Heart left ventricle (tissue), 16 donors: ENCODE measurements at regions of chr12 and their contacts with region 1.

Region 1: GRCh38 chr12:27434673-27435565 is 11.6 kb upstream of the SMCO2 start:
- DNase-seq: no peak
- ATAC-seq: peak; percentile 53 to 63 (median 59)
- H3K4me3 ChIP-seq: no peak overlapping the region
- H3K27ac ChIP-seq: peak overlapping the region in 6 of 12 donors; percentile 3 to 45 (median 27)
- H3K4me1 ChIP-seq: peaks cover 0 to 19% (median 3%) of the 10 kb centered on the region in 12 donors
- H3K27me3 ChIP-seq: no peaks in the 10 kb centered on the region
- CTCF ChIP-seq: peak; percentile 30 to 77 (median 57)
- POLR2A ChIP-seq: no peak

Region 2: GRCh38 chr12:27480016-27480415 is 45.1 kb after region 1 on chr12:
- intact Hi-C with region 1: loop called in 1 of 10 experiments (anchors 5 kb)
- DNase-seq: no peak
- ATAC-seq: no peak
- H3K4me3 ChIP-seq: no peak overlapping the region
- H3K27ac ChIP-seq: no peak overlapping the region
- H3K4me1 ChIP-seq: peaks cover 0 to under 1% (median 0%) of the 10 kb centered on the region in 12 donors
- H3K27me3 ChIP-seq: no peaks in the 10 kb centered on the region
- CTCF ChIP-seq: no peak
- POLR2A ChIP-seq: no peak

Region 3: GRCh38 chr12:27505109-27505508 is 70.2 kb after region 1 on chr12:
- intact Hi-C with region 1: loop called in 1 of 10 experiments (anchors 5 kb)
- DNase-seq: no peak
- ATAC-seq: no peak
- H3K4me3 ChIP-seq: no peak overlapping the region
- H3K27ac ChIP-seq: peak overlapping the region; percentile 31 to 83 (median 59)
- H3K4me1 ChIP-seq: peaks cover 0 to 34% (median 14%) of the 10 kb centered on the region in 12 donors
- H3K27me3 ChIP-seq: no peaks in the 10 kb centered on the region
- CTCF ChIP-seq: no peak
- POLR2A ChIP-seq: no peak

Region 4: DNA sequence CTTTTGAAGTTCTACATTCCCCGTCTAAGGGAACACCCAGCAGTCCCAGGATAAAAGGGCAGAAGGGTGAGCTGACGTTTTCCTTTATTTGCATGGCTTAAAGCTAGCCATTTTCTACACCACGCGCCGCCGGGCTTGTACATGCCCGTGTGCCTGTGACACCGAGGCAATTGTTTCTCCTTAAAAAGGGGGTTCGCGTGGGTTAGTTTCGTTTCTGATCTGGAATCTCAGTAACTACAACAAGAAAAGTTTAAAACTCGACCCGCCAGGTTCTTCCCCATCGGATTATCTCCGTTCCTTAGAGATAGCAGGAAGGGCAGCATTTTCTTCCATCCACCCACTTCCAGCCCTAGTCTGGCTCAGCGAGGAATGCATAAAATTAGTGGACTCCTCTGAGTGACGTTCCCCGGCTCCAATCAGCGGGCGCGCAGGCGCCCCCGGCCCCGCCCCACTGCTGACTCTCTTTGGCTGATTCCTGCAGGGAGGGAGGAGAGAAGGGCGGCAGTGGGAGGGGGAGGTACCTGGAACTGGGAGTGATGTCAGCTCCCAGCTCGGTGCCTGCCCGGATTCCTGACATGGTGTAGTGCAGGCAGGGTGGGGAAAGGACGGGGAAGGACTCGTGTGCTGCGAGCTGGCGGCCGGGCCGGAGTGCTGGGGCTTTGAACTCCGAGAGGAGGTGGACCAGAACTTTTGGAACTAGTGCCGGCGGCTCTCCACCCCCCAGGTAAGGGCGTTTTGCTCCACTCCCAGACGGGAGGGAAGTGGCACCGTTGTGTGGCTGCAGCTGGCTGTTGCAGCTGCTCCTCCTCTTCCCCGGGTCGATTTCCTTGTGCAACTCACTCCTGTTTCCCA is 88.9 kb after region 1 on chr12 and contains the start of gene PPFIBP1:
- intact Hi-C with region 1: loop called in 7 of 10 experiments (anchors 5 to 10 kb)
- DNase-seq: peak; percentile 98 to 99 (median 99)
- ATAC-seq: peak; percentile 97 to 98 (median 98)
- H3K4me3 ChIP-seq: peak within 1 kb of the TSS; percentile 48 to 91 (median 76)
- H3K27ac ChIP-seq: peak within 1 kb of the TSS; percentile 75 to 97 (median 92)
- H3K4me1 ChIP-seq: peaks cover 4 to 64% (median 43%) of the 10 kb centered on the region in 12 donors
- H3K27me3 ChIP-seq: no peaks in the 10 kb centered on the region
- CTCF ChIP-seq: peak in 7 of 12 donors; percentile 18 to 37 (median 26)
- POLR2A ChIP-seq: peak in 1 of 2 donors; percentile 94
- total RNA-seq, gene PPFIBP1: 141 to 413 (median 277) TPM

Region 5: GRCh38 chr12:27644158-27644845 is 209.4 kb after region 1 on chr12:
- intact Hi-C with region 1: loop called in 2 of 10 experiments (anchors 5 to 10 kb)
- DNase-seq: no peak
- ATAC-seq: no peak
- H3K4me3 ChIP-seq: no peak overlapping the region
- H3K27ac ChIP-seq: no peak overlapping the region
- H3K4me1 ChIP-seq: peaks cover 0 to 37% (median 16%) of the 10 kb centered on the region in 12 donors
- H3K27me3 ChIP-seq: no peaks in the 10 kb centered on the region
- CTCF ChIP-seq: no peak
- POLR2A ChIP-seq: no peak